ENCODE measurements at regions of chr12 and their contacts with region 1.

Region 1: DNA sequence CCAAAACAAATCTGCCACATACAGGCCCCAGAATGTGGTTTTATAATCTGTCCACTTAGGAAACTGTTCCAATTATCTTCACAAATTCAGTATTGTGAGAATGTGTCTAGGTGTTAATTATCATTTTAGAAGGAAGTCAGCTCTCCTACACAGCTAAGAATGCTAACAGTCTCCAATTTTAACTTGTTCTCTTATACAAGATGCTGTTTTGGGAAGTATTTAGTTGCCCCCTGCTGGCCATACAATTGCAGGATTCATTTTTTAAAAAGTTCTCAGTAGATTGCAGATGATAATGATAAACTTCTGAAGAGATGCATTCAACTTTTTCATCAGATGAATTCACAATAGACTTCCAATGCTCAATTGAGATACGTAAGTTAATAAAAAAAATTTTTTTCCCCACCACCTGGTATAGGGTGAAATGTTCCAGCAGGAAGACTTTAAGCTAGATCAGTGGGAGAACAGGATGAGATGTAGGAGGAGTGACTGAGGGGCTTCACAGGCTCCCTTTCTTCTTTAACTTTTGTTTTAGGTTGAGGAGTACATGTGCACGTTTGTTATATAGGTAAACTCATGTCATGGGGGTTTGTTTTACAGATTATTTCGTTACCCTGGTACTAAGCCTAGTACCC is 27.3 kb upstream of the OSBPL8 start:
- DNase-seq: peak in 4 of 5 donors; percentile 59 to 63 (median 60)
- H3K4me3 ChIP-seq: no peak overlapping the region
- H3K4me3 Mint-ChIP-seq: no peak overlapping the region
- H3K27ac ChIP-seq: no peak overlapping the region
- H3K27ac Mint-ChIP-seq: peak overlapping the region in 2 of 7 donors; percentile 46 to 83
- H3K4me1 ChIP-seq: no peaks in the 10 kb centered on the region
- H3K4me1 Mint-ChIP-seq: peaks cover 0 to 3% (median 0%) of the 10 kb centered on the region in 4 donors
- H3K27me3 ChIP-seq: no peaks in the 10 kb centered on the region
- H3K27me3 Mint-ChIP-seq: no peaks in the 10 kb centered on the region

Region 2: DNA sequence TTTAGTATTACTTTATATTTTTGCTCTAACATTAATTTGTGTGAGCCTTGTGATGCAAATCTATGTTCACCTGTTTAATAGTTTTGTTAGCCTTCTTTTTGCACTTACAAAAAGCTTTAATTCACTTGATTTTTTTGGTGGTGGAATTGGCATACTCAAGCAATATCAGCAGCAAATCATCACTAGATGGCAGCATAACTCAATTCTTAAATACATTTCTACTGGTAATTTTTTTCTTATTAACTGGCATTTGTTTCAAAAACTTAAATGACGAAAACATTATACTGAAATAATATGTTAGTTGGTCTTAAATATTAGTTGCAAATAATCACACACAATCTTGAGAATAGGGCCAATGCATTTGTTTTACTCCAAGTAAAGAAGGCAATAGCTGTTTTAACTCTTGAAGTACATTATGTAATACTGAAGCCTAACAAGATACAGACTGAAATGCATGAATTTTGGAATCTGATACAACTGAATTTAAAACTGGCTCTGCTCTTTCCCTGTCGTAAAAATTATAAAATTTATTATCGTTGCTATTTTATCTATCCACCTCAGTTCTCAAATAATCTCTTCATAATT is 1897.7 kb before region 1 on chr12:
- CTCF ChIA-PET with region 1: interaction called, 3 read pairs
- POLR2A ChIA-PET with region 1: no interaction called
- intact Hi-C with region 1: loop called (anchors 2 kb)
- DNase-seq: peak in 4 of 5 donors; percentile 23 to 44 (median 39)
- H3K4me3 ChIP-seq: no peak overlapping the region
- H3K4me3 Mint-ChIP-seq: no peak overlapping the region
- H3K27ac ChIP-seq: no peak overlapping the region
- H3K27ac Mint-ChIP-seq: no peak overlapping the region
- H3K4me1 ChIP-seq: no peaks in the 10 kb centered on the region
- H3K4me1 Mint-ChIP-seq: no peaks in the 10 kb centered on the region
- H3K27me3 ChIP-seq: no peaks in the 10 kb centered on the region
- H3K27me3 Mint-ChIP-seq: peaks cover 0 to 2% of the 10 kb centered on the region in 2 donors

Region 3: DNA sequence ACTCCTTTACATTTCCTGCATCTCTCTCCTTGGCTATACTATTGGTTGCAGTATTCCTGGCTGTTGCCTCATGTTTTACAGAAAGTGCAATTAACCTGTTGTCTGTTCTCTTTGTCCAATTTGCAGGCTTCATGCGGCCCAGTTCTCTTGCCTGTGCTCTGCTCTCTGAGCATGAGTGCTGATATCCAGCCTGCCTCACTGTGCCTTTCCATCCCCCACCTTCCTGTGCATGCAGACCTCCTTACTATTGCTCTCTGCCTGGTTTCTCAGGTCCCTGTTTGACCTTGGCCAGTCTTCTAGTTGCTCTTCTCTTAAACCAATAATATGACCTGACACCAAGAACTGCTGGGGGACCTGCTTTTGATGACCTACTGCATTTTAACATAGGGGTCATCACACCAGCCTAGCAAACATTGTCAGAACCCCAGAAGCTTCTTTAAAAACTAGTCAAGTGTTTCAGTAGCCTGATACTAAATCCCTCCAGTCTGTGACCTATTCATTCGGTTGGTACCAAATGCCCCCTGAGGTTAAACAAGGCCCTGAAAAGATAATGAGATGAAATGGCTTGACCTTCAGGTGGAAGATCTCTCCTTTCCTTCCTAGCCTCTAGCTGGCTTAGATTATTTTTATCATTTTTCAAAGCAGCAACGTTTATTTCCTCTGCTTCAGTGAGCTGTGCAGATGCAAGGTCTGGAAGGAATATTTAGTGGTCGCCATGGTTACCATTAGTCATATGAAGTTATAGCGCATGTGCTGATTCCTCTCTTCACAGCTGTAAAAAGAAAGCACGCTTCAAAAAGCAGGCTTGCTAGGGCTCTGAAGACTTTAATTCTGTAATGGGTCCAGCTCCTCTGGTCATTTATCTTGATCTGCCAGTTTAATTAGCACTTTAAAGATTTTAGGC is 771.8 kb before region 1 on chr12:
- CTCF ChIA-PET with region 1: no interaction called
- POLR2A ChIA-PET with region 1: no interaction called
- intact Hi-C with region 1: loop called (anchors 5 kb)
- DNase-seq: peak; percentile 39 to 66 (median 59)
- H3K4me3 ChIP-seq: no peak overlapping the region
- H3K4me3 Mint-ChIP-seq: peak overlapping the region in 1 of 8 donors; percentile 36
- H3K27ac ChIP-seq: peak overlapping the region; percentile 39
- H3K27ac Mint-ChIP-seq: peak overlapping the region; percentile 64 to 93 (median 87)
- H3K4me1 ChIP-seq: peaks cover 23% of the 10 kb centered on the region
- H3K4me1 Mint-ChIP-seq: peaks cover 10 to 26% (median 18%) of the 10 kb centered on the region in 4 donors
- H3K27me3 ChIP-seq: no peaks in the 10 kb centered on the region
- H3K27me3 Mint-ChIP-seq: no peaks in the 10 kb centered on the region

Region 4: DNA sequence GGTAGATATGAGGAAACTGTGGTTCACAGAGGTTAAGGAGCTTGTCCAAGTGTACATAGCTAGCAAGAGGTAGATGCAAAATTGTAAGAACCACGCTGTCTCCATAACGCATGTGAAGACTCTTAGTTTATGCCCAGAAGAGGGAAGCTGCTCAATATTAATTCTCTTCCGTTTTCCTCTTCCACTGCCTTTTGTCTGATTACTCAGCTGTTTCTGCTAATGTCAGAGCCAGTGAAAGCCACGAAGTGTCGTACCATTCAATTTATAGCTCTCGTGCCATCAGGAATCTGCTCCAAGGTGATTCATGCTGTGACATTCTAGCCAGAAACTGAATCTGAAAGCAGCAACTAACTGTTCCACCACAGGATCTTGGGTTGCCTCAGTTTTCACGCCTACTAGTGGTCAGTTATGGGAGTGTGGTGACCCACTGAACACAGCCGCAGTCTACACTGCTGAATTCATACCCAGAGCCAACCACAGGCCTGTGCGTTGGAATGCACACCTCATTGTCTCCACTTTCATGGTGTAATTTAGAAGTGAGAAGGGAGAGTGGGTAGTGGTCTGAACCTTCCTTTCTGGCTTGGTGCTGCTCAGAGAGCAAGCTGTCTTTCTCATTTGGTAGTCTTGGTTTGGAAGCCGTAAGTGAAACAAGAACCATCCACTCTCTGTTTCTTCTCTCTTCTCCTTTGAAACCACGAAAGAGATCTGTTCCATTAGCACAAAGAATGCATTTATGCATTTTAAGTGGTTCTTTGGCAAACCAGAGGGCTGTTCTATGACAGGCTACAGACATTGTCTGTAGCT is 428.2 kb before region 1 on chr12:
- CTCF ChIA-PET with region 1: interaction called, 12 read pairs
- POLR2A ChIA-PET with region 1: no interaction called
- intact Hi-C with region 1: loop called (anchors 1 kb)
- DNase-seq: peak; percentile 46 to 57 (median 51)
- H3K4me3 ChIP-seq: peak overlapping the region in 1 of 2 donors; percentile 20
- H3K4me3 Mint-ChIP-seq: peak overlapping the region; percentile 68 to 77 (median 75)
- H3K27ac ChIP-seq: no peak overlapping the region
- H3K27ac Mint-ChIP-seq: peak overlapping the region in 6 of 7 donors; percentile 2 to 83 (median 70)
- H3K4me1 ChIP-seq: no peaks in the 10 kb centered on the region
- H3K4me1 Mint-ChIP-seq: peaks cover 8 to 11% (median 10%) of the 10 kb centered on the region in 4 donors
- H3K27me3 ChIP-seq: no peaks in the 10 kb centered on the region
- H3K27me3 Mint-ChIP-seq: no peaks in the 10 kb centered on the region

Region 5: GRCh38 chr12:76398106-76398505 is 188.8 kb before region 1 on chr12:
- CTCF ChIA-PET with region 1: interaction called, 6 read pairs
- POLR2A ChIA-PET with region 1: no interaction called
- intact Hi-C with region 1: loop called (anchors 5 kb)
- DNase-seq: no peak
- H3K4me3 ChIP-seq: no peak overlapping the region
- H3K4me3 Mint-ChIP-seq: no peak overlapping the region
- H3K27ac ChIP-seq: no peak overlapping the region
- H3K27ac Mint-ChIP-seq: peak overlapping the region in 1 of 7 donors; percentile 13
- H3K4me1 ChIP-seq: no peaks in the 10 kb centered on the region
- H3K4me1 Mint-ChIP-seq: no peaks in the 10 kb centered on the region
- H3K27me3 ChIP-seq: no peaks in the 10 kb centered on the region
- H3K27me3 Mint-ChIP-seq: no peaks in the 10 kb centered on the region

Region 6: GRCh38 chr12:76559400-76560085 is 27.3 kb before region 1 on chr12 and contains the start of gene OSBPL8:
- CTCF ChIA-PET with region 1: interaction called, 21 read pairs
- POLR2A ChIA-PET with region 1: interaction called, 13 read pairs
- intact Hi-C with region 1: loop called (anchors 1 kb)
- DNase-seq: peak; percentile 89 to 94 (median 90)
- H3K4me3 ChIP-seq: peak within 1 kb of the TSS; percentile 95
- H3K4me3 Mint-ChIP-seq: peak within 1 kb of the TSS; percentile 96 to 97 (median 96)
- H3K27ac ChIP-seq: peak within 1 kb of the TSS; percentile 89
- H3K27ac Mint-ChIP-seq: peak within 1 kb of the TSS; percentile 94 to 99 (median 98)
- H3K4me1 ChIP-seq: peaks cover 46% of the 10 kb centered on the region
- H3K4me1 Mint-ChIP-seq: peaks cover 24 to 52% (median 31%) of the 10 kb centered on the region in 4 donors
- H3K27me3 ChIP-seq: no peaks in the 10 kb centered on the region
- H3K27me3 Mint-ChIP-seq: no peaks in the 10 kb centered on the region
- total RNA-seq, gene OSBPL8: 126 to 127 TPM